Mucosa of descending colon (tissue), 3 donors: ENCODE measurements at regions of chr6 and their contacts with region 1.

Region 1: GRCh38 chr6:70551566-70551965 is 15.2 kb upstream of the SDHAF4 start:
- DNase-seq: peak in 1 of 3 donors; percentile 16
- ATAC-seq: peak; percentile 53
- H3K4me3 ChIP-seq: no peak overlapping the region
- H3K4me1 ChIP-seq: no peaks in the 10 kb centered on the region
- CTCF ChIP-seq: no peak

Region 2: GRCh38 chr6:70282312-70282918 is 269.2 kb before region 1 on chr6:
- intact Hi-C with region 1: no loop called
- DNase-seq: no peak
- ATAC-seq: peak; percentile 17
- H3K4me3 ChIP-seq: no peak overlapping the region
- H3K4me1 ChIP-seq: peaks cover 5% of the 10 kb centered on the region
- CTCF ChIP-seq: no peak

Region 3: GRCh38 chr6:70686548-70687133 is 135.1 kb after region 1 on chr6:
- intact Hi-C with region 1: loop called in 1 of 2 experiments (anchors 10 kb)
- DNase-seq: peak in 1 of 3 donors; percentile 60
- ATAC-seq: peak; percentile 69
- H3K4me3 ChIP-seq: no peak overlapping the region
- H3K4me1 ChIP-seq: peaks cover 15% of the 10 kb centered on the region
- CTCF ChIP-seq: no peak